G401 (cell line): ENCODE measurements at regions of chr6 and their contacts with region 1.

Region 1: GRCh38 chr6:46828939-46829338 is 35.8 kb downstream of the MEP1A start:
- DNase-seq: no peak

Region 2: GRCh38 chr6:46867411-46867810 is 38.5 kb after region 1 on chr6:
- in situ Hi-C with region 1: loop called (anchors 5 kb)
- DNase-seq: no peak